Mucosa of descending colon (tissue), 3 donors: ENCODE measurements at regions of chr13 and their contacts with region 1.

Region 1: DNA sequence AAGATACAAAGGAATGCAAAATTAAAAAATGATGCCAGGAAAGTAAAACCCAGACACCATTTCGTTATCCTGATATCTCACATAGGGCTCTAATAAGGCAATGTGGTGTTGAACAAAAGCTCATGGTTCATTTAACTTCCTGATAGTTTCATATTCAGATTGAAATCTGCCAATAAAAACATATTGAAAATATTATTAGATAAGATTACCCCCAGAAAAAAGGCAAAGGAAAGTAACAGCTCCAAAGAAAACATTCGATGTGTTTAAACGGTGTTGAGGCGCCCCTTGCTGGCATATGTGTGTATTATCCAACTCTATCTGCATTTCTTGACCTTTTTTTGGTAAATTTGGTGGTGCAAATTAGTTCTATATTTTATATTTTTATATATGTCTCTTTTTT is 75.9 kb downstream of the ESD start:
- DNase-seq: peak in 1 of 3 donors; percentile 68
- ATAC-seq: peak; percentile 44
- H3K4me3 ChIP-seq: no peak overlapping the region
- H3K4me1 ChIP-seq: no peaks in the 10 kb centered on the region
- CTCF ChIP-seq: no peak

Region 2: DNA sequence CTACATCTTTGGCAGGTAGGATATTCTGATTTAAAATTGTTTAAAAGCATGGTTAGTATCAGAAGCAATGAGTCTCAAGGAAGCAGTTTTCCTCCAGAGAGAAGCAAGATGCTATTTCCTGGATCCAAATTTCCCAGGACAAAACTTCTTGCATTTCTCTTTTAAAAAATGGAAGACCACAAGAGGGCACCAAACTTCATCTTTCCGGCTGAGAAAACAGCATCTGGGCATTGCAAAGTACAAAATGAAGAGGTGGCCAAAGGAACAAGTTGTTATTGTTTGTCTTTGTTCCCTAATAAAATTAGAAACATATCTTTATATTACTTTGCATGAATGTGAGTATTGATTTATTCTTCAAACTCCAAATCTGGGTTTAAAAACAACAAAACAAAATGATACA is 228.1 kb before region 1 on chr13:
- intact Hi-C with region 1: loop called (anchors 5 kb)
- DNase-seq: peak in 1 of 3 donors; percentile 49
- ATAC-seq: peak; percentile 40
- H3K4me3 ChIP-seq: no peak overlapping the region
- H3K4me1 ChIP-seq: no peaks in the 10 kb centered on the region
- CTCF ChIP-seq: no peak

Region 3: DNA sequence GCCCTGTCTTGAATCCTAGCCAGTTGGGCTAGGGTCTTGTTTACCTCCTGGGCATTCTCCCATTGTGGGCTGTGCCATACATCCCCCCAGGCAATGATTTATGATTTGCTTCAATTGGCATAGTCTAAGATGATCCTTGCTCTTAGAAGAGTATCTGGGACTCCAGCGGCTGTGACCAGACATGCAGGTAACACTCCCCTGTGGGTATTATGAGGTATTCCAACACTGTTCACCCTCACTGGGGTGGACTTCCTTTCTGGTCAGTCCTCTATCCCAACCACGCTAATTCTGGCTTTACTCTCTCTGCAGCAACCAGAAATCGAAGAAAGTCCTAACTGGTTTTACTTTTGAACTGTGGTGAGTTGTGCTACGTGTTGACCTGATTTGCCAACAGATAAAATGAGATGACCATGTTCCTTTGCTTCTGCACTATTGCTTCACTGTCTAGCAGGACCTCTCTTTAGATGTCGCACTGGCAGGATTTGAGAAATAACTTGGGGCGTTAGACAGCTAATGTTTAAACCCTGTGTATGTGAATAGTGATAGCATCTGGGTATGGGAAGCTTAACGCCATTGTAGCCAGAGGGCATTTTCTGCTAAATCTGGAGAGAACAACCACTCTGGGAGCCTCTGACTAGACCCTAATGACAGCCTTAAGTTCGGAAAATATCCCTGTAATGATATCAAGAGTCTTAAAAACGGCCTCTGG is 174.8 kb before region 1 on chr13:
- intact Hi-C with region 1: loop called (anchors 5 kb)
- DNase-seq: no peak
- ATAC-seq: no peak
- H3K4me3 ChIP-seq: no peak overlapping the region
- H3K4me1 ChIP-seq: no peaks in the 10 kb centered on the region
- CTCF ChIP-seq: no peak

Region 4: GRCh38 chr13:46751811-46752635 is 31.0 kb after region 1 on chr13:
- intact Hi-C with region 1: no loop called
- DNase-seq: peak in 1 of 3 donors; percentile 18
- ATAC-seq: peak; percentile 39
- H3K4me3 ChIP-seq: no peak overlapping the region
- H3K4me1 ChIP-seq: peaks cover 6% of the 10 kb centered on the region
- CTCF ChIP-seq: no peak

Region 5: GRCh38 chr13:46762449-46762848 is 41.4 kb after region 1 on chr13:
- intact Hi-C with region 1: no loop called
- DNase-seq: no peak
- ATAC-seq: no peak
- H3K4me3 ChIP-seq: no peak overlapping the region
- H3K4me1 ChIP-seq: peaks cover 22% of the 10 kb centered on the region
- CTCF ChIP-seq: no peak